T-cell (primary cell): ENCODE measurements at regions of chr1 and their contacts with region 1.

Region 1: GRCh38 chr1:206635080-206635977 is at the start of gene DYRK3:
- DNase-seq: peak; percentile 67 to 92 (median 79)
- ATAC-seq: peak; percentile 95 to 96 (median 96)
- H3K4me3 ChIP-seq: peak within 1 kb of the TSS; percentile 51 to 64
- H3K4me3 Mint-ChIP-seq: peak within 1 kb of the TSS; percentile 84 to 89 (median 85)
- H3K27ac ChIP-seq: no peak within 1 kb of the TSS
- H3K27ac Mint-ChIP-seq: peak within 1 kb of the TSS; percentile 34 to 81
- H3K4me1 ChIP-seq: peaks cover 9 to 19% of the 10 kb centered on the region in 2 experiments
- H3K4me1 Mint-ChIP-seq: peaks cover 11 to 21% (median 15%) of the 10 kb centered on the region in 3 donors
- H3K27me3 ChIP-seq: peaks cover 0 to 17% of the 10 kb centered on the region in 2 experiments
- H3K27me3 Mint-ChIP-seq: peaks cover 3 to 11% of the 10 kb centered on the region in 2 donors
- total RNA-seq, gene DYRK3: 0.73 to 2.0 (median 1.6) TPM

Region 2: DNA sequence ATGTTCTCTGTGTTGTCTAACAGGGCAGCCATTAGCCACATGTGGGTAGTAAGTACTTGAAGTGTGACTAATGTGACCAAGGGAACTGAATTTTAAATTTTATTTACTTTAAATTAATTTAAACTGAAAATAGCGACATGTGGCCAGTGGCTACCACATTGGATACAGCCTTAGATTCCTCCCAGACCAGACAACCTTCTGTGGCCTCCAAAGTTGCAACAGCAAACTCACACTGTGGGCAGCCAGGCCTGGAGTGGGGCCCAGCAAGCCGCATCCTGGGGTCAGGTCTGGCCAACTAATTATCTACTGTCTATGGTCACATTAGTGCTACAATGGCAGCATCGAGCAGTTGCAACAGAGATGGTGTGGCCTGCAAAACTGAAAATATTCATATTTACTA is 34.8 kb before region 1 on chr1:
- CTCF ChIA-PET with region 1: no interaction called
- POLR2A ChIA-PET with region 1: no interaction called
- DNase-seq: no peak
- ATAC-seq: no peak
- H3K4me3 ChIP-seq: no peak overlapping the region
- H3K4me3 Mint-ChIP-seq: no peak overlapping the region
- H3K27ac ChIP-seq: no peak overlapping the region
- H3K27ac Mint-ChIP-seq: no peak overlapping the region
- H3K4me1 ChIP-seq: no peaks in the 10 kb centered on the region
- H3K4me1 Mint-ChIP-seq: no peaks in the 10 kb centered on the region
- H3K27me3 ChIP-seq: no peaks in the 10 kb centered on the region
- H3K27me3 Mint-ChIP-seq: no peaks in the 10 kb centered on the region

Region 3: DNA sequence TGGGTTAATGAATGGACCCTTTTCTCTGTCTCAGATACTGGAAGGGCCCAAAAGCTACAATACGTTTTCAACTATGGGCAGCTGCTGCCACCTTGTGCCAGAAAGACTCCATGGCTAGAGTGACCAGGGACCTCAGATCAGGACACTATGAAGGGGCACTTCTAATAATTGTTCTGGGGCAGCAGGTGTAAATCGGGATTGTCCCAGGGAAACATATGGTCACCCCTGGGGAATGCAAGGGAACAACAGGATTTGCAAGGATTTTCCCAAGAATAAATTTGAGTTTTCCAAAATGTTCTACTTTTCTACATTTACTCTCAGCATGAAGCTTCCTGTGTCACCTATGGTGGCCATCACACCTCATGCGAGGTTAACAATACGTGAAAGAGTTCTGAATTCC is 346.9 kb after region 1 on chr1:
- CTCF ChIA-PET with region 1: interaction called in 1 of 2 experiments, 17 read pairs
- POLR2A ChIA-PET with region 1: no interaction called
- DNase-seq: peak; percentile 16 to 75 (median 53)
- ATAC-seq: peak; percentile 71 to 85 (median 80)
- H3K4me3 ChIP-seq: no peak overlapping the region
- H3K4me3 Mint-ChIP-seq: no peak overlapping the region
- H3K27ac ChIP-seq: no peak overlapping the region
- H3K27ac Mint-ChIP-seq: no peak overlapping the region
- H3K4me1 ChIP-seq: no peaks in the 10 kb centered on the region
- H3K4me1 Mint-ChIP-seq: no peaks in the 10 kb centered on the region
- H3K27me3 ChIP-seq: peaks cover 0 to 10% of the 10 kb centered on the region in 2 experiments
- H3K27me3 Mint-ChIP-seq: peaks cover 12 to 29% of the 10 kb centered on the region in 2 donors